MCF 10A (cell line): ENCODE measurements at regions of chr11 and their contacts with region 1.

Region 1: GRCh38 chr11:72471005-72471898 is 36.9 kb upstream of the CLPB start:
- DNase-seq: peak; percentile 85
- H3K4me3 Mint-ChIP-seq: no peak overlapping the region
- H3K27ac Mint-ChIP-seq: no peak overlapping the region
- H3K4me1 Mint-ChIP-seq: peaks cover 10% of the 10 kb centered on the region
- H3K27me3 Mint-ChIP-seq: peaks cover 29% of the 10 kb centered on the region
- CTCF ChIP-seq: peak; percentile 80

Region 2: GRCh38 chr11:72287293-72287692 is 184.0 kb before region 1 on chr11:
- CTCF ChIA-PET with region 1: interaction called, 10 read pairs
- POLR2A ChIA-PET with region 1: no interaction called
- intact Hi-C with region 1: no loop called
- DNase-seq: no peak
- H3K4me3 Mint-ChIP-seq: no peak overlapping the region
- H3K27ac Mint-ChIP-seq: no peak overlapping the region
- H3K4me1 Mint-ChIP-seq: no peaks in the 10 kb centered on the region
- H3K27me3 Mint-ChIP-seq: peaks cover 22% of the 10 kb centered on the region
- CTCF ChIP-seq: no peak

Region 3: DNA sequence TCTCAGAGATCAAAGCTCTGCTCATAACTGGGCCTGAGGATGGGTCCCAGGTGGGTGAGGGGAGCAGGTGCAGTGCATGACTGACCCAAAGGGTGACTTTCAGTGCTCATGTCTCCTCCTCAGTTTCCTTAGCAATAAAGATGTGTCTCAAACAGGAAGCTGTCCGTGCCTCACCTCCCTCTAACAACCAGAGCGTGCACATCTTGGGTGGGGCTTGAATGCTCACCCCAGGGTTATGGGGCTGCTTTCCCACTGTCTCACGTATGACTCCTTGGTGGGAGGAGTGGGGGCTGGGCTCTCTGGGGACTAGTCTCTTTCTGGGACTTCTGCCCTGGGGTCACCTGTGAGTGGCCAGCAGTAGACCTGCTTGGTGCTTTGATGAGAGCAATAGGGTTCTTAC is 173.4 kb before region 1 on chr11:
- CTCF ChIA-PET with region 1: no interaction called
- POLR2A ChIA-PET with region 1: no interaction called
- intact Hi-C with region 1: no loop called
- DNase-seq: no peak
- H3K4me3 Mint-ChIP-seq: no peak overlapping the region
- H3K27ac Mint-ChIP-seq: no peak overlapping the region
- H3K4me1 Mint-ChIP-seq: no peaks in the 10 kb centered on the region
- H3K27me3 Mint-ChIP-seq: no peaks in the 10 kb centered on the region
- CTCF ChIP-seq: no peak

Region 4: GRCh38 chr11:72454791-72455190 is 16.5 kb before region 1 on chr11:
- CTCF ChIA-PET with region 1: interaction called, 32 read pairs
- POLR2A ChIA-PET with region 1: interaction called, 5 read pairs
- intact Hi-C with region 1: no loop called
- DNase-seq: no peak
- H3K4me3 Mint-ChIP-seq: no peak overlapping the region
- H3K27ac Mint-ChIP-seq: no peak overlapping the region
- H3K4me1 Mint-ChIP-seq: no peaks in the 10 kb centered on the region
- H3K27me3 Mint-ChIP-seq: peaks cover 25% of the 10 kb centered on the region
- CTCF ChIP-seq: no peak

Region 5: DNA sequence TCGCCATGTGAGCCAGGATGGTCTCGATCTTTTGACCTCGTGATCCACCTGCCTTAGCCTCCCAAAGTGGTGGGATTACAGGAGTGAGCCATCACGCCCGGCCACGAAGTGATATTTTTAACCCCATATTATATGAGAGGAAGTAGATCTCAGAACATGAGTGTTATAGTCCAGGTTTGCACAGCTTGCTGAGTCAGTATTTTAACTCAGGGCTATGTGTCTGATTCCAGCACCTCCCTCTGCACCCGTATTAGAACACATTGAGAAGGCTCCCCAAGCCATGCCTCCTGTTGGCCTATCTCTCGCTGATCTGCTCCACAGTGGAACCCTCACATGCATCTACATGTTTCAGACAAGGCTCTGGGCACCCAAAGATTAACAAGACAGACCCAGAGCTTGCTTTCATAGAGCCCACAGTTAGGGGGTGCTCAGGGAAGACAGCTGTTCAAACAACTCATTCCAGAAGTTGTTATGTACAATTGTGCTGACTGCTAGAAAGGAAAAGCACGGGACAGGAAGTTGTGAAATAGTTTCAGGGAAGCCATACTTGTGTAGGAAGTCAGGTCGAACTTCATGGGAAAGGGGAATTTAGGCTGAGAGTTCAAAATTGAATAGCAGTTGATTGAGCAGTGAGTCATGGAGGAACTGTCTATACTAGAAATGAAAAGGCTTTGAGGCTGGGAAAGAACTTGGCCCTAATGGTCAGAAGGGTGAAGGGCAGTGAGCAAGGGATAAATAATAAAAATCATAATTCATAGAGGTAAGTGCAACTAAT is 12.3 kb after region 1 on chr11:
- CTCF ChIA-PET with region 1: interaction called, 17 read pairs
- POLR2A ChIA-PET with region 1: no interaction called
- intact Hi-C with region 1: no loop called
- DNase-seq: peak; percentile 44
- H3K4me3 Mint-ChIP-seq: no peak overlapping the region
- H3K27ac Mint-ChIP-seq: peak overlapping the region; percentile 91
- H3K4me1 Mint-ChIP-seq: peaks cover 15% of the 10 kb centered on the region
- H3K27me3 Mint-ChIP-seq: no peaks in the 10 kb centered on the region
- CTCF ChIP-seq: no peak

Region 6: DNA sequence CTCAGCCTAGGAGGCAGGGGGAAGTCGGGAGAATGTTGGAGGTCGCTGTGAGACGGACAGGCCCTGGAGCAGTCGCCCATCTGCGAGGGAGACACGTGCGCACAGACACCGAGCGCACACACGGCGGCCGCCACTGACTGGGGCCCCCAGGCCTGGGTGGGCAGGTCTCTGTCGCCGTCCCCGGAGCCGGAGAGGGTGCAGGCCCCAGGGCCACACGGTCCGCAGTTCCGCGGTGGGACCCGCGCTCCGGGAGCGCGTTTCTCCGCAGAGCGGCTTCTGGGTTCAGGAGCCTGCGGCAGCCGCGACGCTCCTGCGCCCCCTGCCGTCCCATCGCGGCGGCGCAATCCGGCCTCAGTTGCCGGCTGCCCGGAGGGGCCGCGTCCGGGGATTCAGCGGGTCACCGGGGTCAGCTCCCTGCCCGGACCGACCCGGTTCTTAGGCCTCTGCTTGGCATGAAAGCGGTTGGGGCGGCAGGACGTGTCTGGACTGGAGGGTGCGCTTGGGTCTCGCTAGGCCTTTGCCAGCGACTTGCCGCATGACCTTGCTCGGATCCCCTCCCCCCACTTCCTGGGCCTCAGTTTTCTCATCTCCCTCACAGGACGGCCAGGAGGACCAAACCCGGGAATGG is 171.7 kb after region 1 on chr11:
- CTCF ChIA-PET with region 1: interaction called, 8 read pairs
- POLR2A ChIA-PET with region 1: no interaction called
- intact Hi-C with region 1: loop called (anchors 1 kb)
- DNase-seq: peak; percentile 84
- H3K4me3 Mint-ChIP-seq: no peak overlapping the region
- H3K27ac Mint-ChIP-seq: no peak overlapping the region
- H3K4me1 Mint-ChIP-seq: peaks cover 7% of the 10 kb centered on the region
- H3K27me3 Mint-ChIP-seq: no peaks in the 10 kb centered on the region
- CTCF ChIP-seq: peak; percentile 97